Activated B cell treated with CpG ODN at 0.5 μM for 24 hours (primary cell): ENCODE measurements at regions of chr17 and their contacts with region 1.

Region 1: DNA sequence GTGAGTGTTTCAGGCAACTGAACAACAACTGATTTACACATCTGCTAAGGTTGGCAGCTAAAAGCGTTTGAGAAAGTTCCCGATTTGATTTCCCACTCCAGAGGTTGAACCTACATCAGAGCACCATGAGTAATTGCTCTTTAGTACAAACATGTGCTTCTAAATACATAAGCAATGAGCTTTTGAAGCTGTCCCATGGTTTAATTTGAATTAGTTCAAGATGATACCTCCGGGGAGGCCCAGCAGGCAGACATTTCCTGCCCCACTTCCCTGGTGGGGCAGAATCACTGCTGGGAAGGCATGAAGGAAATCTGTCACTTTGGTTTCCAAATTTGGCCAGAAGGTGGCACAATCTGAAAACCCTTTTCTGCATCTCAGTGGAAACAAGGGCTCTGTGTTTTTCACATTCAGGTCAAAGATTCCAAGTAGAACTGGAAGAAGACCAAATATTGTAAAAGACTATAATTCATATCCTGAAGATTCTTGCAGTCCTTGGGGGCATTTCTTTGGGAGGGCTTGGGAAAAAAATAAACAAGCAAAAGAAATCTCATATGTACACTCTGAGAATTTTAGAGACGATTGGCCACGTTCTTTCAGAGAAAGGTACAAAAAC is 176.2 kb upstream of the FAM20A start:
- DNase-seq: no peak
- ATAC-seq: no peak
- H3K4me3 Mint-ChIP-seq: no peak overlapping the region
- H3K27ac Mint-ChIP-seq: no peak overlapping the region
- H3K4me1 Mint-ChIP-seq: peaks cover 18% of the 10 kb centered on the region
- H3K27me3 Mint-ChIP-seq: no peaks in the 10 kb centered on the region
- CTCF ChIP-seq: peak; percentile 35

Region 2: GRCh38 chr17:68909066-68909465 is 131.7 kb after region 1 on chr17:
- CTCF ChIA-PET with region 1: no interaction called
- POLR2A ChIA-PET with region 1: no interaction called
- intact Hi-C with region 1: loop called (anchors 5 kb)
- DNase-seq: no peak
- ATAC-seq: no peak
- H3K4me3 Mint-ChIP-seq: no peak overlapping the region
- H3K27ac Mint-ChIP-seq: no peak overlapping the region
- H3K4me1 Mint-ChIP-seq: peaks cover 2% of the 10 kb centered on the region
- H3K27me3 Mint-ChIP-seq: peaks cover 6% of the 10 kb centered on the region
- CTCF ChIP-seq: no peak

Region 3: GRCh38 chr17:68972119-68972704 is 194.9 kb after region 1 on chr17:
- CTCF ChIA-PET with region 1: interaction called, 4 read pairs
- POLR2A ChIA-PET with region 1: no interaction called
- intact Hi-C with region 1: loop called (anchors 2 kb)
- DNase-seq: no peak
- ATAC-seq: no peak
- H3K4me3 Mint-ChIP-seq: no peak overlapping the region
- H3K27ac Mint-ChIP-seq: no peak overlapping the region
- H3K4me1 Mint-ChIP-seq: peaks cover 5% of the 10 kb centered on the region
- H3K27me3 Mint-ChIP-seq: peaks cover 3% of the 10 kb centered on the region
- CTCF ChIP-seq: no peak